Right ventricle myocardium superior (tissue), 1 donor: ENCODE measurements at regions of chr20 and their contacts with region 1.

Region 1: GRCh38 chr20:47610247-47610944 is 108.7 kb downstream of the NCOA3 start:
- DNase-seq: no peak
- ATAC-seq: peak; percentile 48

Region 2: DNA sequence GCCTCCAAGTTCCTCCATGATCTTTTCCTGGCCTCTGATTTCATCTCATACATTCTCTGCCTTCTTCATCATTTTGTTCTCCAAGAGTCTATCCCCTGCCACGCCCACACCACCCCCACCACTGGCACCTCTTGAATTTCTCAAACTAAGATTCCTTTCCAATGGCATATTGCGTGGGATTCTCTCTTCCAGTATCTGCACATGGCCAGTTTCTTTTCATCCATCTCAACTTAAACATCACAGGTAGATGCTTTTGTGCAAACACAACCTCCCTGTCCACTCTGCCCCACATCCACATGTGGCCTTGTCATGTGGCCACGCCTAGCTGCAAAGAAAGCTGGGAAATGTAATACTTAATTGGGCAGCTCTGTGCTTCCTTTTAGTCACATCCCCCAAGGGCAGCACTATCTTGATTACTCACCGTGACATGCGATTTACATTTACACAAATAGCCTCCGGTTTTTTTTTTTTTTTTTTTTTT is 220.5 kb before region 1 on chr20:
- intact Hi-C with region 1: loop called (anchors 10 kb)
- DNase-seq: no peak
- ATAC-seq: no peak

Region 3: GRCh38 chr20:47501483-47502270 is 108.7 kb before region 1 on chr20 and contains the start of gene NCOA3:
- intact Hi-C with region 1: loop called (anchors 10 kb)
- DNase-seq: peak; percentile 99
- ATAC-seq: peak; percentile 98
- total RNA-seq, gene NCOA3: 19.1 TPM